Testis (tissue), 5 donors: ENCODE measurements at regions of chr11 and their contacts with region 1.

Region 1: GRCh38 chr11:111283945-111284481 is 14.3 kb upstream of the POU2AF3 start:
- DNase-seq: no peak
- H3K4me3 ChIP-seq: no peak overlapping the region
- H3K27ac ChIP-seq: no peak overlapping the region
- H3K4me1 ChIP-seq: no peaks in the 10 kb centered on the region
- H3K27me3 ChIP-seq: no peaks in the 10 kb centered on the region
- CTCF ChIP-seq: no peak
- POLR2A ChIP-seq: no peak

Region 2: DNA sequence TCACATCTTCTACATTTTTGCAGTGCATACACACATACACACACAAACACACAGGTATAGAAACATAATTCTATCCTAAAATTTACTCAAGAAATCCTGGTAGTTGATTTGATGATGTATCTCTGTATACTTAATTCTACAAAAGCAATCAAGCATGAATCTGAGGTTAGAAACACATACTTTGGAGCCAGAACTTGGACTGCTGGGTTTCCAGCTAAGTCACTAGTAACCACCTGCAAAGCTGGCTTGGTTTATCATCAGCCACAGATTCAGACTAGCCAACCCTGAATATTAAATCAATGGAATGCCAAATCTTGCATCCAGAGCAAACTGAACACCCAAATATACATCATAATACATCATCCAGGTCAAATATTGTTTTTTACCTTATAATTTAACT is 63.3 kb before region 1 on chr11:
- intact Hi-C with region 1: no loop called
- DNase-seq: no peak
- H3K4me3 ChIP-seq: no peak overlapping the region
- H3K27ac ChIP-seq: no peak overlapping the region
- H3K4me1 ChIP-seq: no peaks in the 10 kb centered on the region
- H3K27me3 ChIP-seq: no peaks in the 10 kb centered on the region
- CTCF ChIP-seq: no peak
- POLR2A ChIP-seq: no peak

Region 3: DNA sequence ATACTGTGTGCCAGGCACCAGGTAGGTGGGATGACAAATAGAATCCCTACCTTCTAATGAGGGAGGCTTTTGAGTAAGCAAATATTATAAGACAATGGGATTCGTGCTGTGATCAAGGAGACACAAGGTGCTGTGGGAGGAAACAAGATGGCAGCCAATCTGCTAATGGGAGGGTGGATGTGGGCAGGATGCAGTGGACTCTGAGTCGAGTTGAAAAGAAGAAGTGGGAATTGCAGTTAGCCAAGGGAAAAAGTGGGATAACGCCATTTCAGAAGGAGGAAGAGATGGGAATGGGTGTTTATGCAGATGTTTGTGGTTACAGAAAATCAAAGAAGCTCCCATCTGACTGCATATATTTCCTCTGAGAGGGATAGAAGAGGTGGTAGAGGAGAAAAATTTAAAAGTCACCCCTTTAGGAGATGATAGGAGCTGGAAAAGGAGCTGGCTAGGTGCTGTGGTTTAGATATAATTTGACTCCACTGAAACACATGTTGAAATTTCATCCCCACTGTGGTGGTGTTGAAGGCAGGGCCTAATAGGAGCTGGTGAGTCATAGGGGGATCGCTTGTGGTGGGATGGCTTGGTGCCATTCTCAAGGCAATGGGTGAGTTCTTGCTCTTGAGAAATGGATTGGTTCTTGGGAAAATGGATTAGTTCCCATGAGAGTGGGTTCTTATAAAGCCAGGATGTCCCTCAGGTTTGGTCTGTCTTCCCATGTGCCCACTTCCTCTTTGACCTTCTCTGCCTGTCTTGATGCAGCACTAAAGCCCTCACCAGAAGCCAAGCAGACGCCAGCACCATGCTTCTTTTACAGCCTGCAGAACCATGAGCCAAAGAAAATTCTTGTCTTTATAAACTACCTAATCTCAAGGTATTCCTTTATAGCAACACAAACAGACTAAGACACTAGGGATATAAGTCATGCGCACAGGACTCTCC is 125.0 kb after region 1 on chr11:
- intact Hi-C with region 1: no loop called
- DNase-seq: no peak
- H3K4me3 ChIP-seq: no peak overlapping the region
- H3K27ac ChIP-seq: no peak overlapping the region
- H3K4me1 ChIP-seq: no peaks in the 10 kb centered on the region
- H3K27me3 ChIP-seq: no peaks in the 10 kb centered on the region
- CTCF ChIP-seq: no peak
- POLR2A ChIP-seq: no peak

Region 4: DNA sequence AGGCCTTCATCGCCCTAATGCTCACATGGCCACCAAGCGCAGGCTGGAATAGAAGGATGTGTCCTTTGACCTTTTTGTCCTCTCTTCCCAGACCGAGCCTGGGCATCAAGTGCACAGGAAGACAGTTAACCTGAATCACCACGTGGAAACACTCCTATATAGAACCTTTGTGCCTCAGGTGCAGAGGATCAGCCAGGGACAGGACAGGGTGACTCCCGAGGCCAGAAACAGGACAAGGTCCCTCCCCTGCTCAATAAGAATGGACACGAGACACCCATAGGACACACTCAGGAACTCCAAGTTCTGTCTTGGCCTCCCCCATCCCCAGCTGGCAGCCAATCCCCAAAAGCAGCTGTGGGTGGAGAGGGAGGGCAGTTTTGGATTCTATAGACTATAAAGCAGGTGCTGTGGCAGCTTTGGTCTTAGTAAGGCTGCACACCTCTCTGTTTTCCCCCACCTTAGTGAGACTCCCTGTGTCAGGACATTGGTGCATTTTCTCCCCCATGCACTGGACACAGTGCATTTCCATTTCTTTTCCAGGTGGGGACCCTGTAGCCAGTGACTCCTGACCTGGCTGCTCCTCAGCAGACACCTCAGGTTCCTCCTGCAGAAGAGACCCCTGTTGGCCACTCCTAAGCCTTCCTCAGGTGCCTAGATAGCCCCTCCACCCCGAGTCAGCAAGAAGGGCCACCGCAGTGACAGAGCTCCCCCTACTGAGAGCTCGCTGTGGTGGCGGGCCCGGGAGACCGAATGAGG is 138.7 kb after region 1 on chr11:
- intact Hi-C with region 1: loop called (anchors 5 kb)
- DNase-seq: peak; percentile 78
- H3K4me3 ChIP-seq: no peak overlapping the region
- H3K27ac ChIP-seq: no peak overlapping the region
- H3K4me1 ChIP-seq: peaks cover 22% of the 10 kb centered on the region
- H3K27me3 ChIP-seq: no peaks in the 10 kb centered on the region
- CTCF ChIP-seq: peak; percentile 56 to 68 (median 61)
- POLR2A ChIP-seq: no peak

Region 5: GRCh38 chr11:111441443-111441842 is 157.4 kb after region 1 on chr11:
- intact Hi-C with region 1: loop called (anchors 5 kb)
- DNase-seq: no peak
- H3K4me3 ChIP-seq: no peak overlapping the region
- H3K27ac ChIP-seq: no peak overlapping the region
- H3K4me1 ChIP-seq: peaks cover 12% of the 10 kb centered on the region
- H3K27me3 ChIP-seq: no peaks in the 10 kb centered on the region
- CTCF ChIP-seq: no peak
- POLR2A ChIP-seq: no peak

Region 6: GRCh38 chr11:111878849-111879636 is 595.0 kb after region 1 on chr11 and contains the starts of genes CFAP68 and FDXACB1:
- intact Hi-C with region 1: no loop called
- DNase-seq: peak; percentile 99
- H3K4me3 ChIP-seq: peak within 1 kb of the TSS; percentile 73 to 77
- H3K27ac ChIP-seq: peak within 1 kb of the TSS; percentile 96 to 98
- H3K4me1 ChIP-seq: peaks cover 4% of the 10 kb centered on the region
- H3K27me3 ChIP-seq: no peaks in the 10 kb centered on the region
- CTCF ChIP-seq: peak; percentile 94 to 100 (median 99)
- POLR2A ChIP-seq: no peak
- total RNA-seq, gene CFAP68: 62.7 to 68.5 TPM
- total RNA-seq, gene FDXACB1: 7.4 to 7.8 TPM